ENCODE measurements at regions of chr18 and their contacts with region 1.

Region 1: GRCh38 chr18:66966171-66966570 is 362.3 kb upstream of the CDH19 start:
- DNase-seq: no peak
- ATAC-seq: no peak
- H3K4me3 ChIP-seq: no peak overlapping the region
- H3K27ac ChIP-seq: no peak overlapping the region
- H3K4me1 ChIP-seq: no peaks in the 10 kb centered on the region
- H3K27me3 ChIP-seq: no peaks in the 10 kb centered on the region
- CTCF ChIP-seq: no peak

Region 2: DNA sequence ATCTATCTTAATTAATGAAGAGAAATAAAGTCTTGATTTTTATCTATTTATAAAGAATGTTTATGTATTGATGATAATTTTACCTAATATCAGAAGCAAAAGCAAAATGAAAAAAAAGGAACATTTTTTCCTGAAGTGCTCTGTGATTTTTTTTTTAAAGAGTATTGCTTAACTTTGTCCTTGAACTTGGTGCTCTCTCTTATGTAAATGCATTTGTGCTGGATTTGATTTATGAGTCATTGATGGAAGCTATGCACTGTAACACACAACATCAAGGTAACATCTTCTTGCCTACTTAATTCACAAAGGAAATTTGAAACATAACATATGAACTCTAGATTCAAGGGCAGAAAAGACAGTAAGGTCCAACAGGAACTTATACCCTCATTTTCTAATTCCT is 49.3 kb before region 1 on chr18:
- intact Hi-C with region 1: loop called in 1 of 10 experiments (anchors 5 kb)
- DNase-seq: no peak
- ATAC-seq: no peak
- H3K4me3 ChIP-seq: no peak overlapping the region
- H3K27ac ChIP-seq: no peak overlapping the region
- H3K4me1 ChIP-seq: no peaks in the 10 kb centered on the region
- H3K27me3 ChIP-seq: no peaks in the 10 kb centered on the region
- CTCF ChIP-seq: no peak